Mammary epithelial cell (primary cell): ENCODE measurements at regions of chr6 and their contacts with region 1.

Region 1: GRCh38 chr6:134174672-134175198 is 122.3 kb upstream of the SLC2A12 start:
- DNase-seq: peak; percentile 90
- H3K4me3 ChIP-seq: peak overlapping the region; percentile 52 to 99 (median 97)
- H3K27ac ChIP-seq: peak overlapping the region; percentile 94
- H3K4me1 ChIP-seq: peaks cover 43% of the 10 kb centered on the region
- H3K27me3 ChIP-seq: no peaks in the 10 kb centered on the region
- CTCF ChIP-seq: peak in 1 of 2 donors; percentile 8

Region 2: GRCh38 chr6:133184798-133185372 is 989.9 kb before region 1 on chr6:
- CTCF ChIA-PET with region 1: no interaction called
- dilution Hi-C with region 1: no loop called
- in situ Hi-C with region 1: no loop called
- intact Hi-C with region 1: no loop called
- DNase-seq: no peak
- H3K4me3 ChIP-seq: no peak overlapping the region
- H3K27ac ChIP-seq: no peak overlapping the region
- H3K4me1 ChIP-seq: no peaks in the 10 kb centered on the region
- H3K27me3 ChIP-seq: peaks cover 7% of the 10 kb centered on the region
- CTCF ChIP-seq: peak; percentile 54

Region 3: GRCh38 chr6:134317471-134318131 is 142.9 kb after region 1 on chr6 and contains the start of gene SGK1:
- CTCF ChIA-PET with region 1: no interaction called
- dilution Hi-C with region 1: no loop called
- in situ Hi-C with region 1: no loop called
- intact Hi-C with region 1: loop called (anchors 5 kb)
- DNase-seq: peak; percentile 78
- H3K4me3 ChIP-seq: peak within 1 kb of the TSS; percentile 45 to 60 (median 52)
- H3K27ac ChIP-seq: no peak within 1 kb of the TSS
- H3K4me1 ChIP-seq: peaks cover 4% of the 10 kb centered on the region
- H3K27me3 ChIP-seq: no peaks in the 10 kb centered on the region
- CTCF ChIP-seq: peak in 1 of 2 donors; percentile 2
- total RNA-seq, gene SGK1: 84.5 to 755 TPM

Region 4: GRCh38 chr6:134422426-134423231 is 247.9 kb after region 1 on chr6:
- CTCF ChIA-PET with region 1: no interaction called
- dilution Hi-C with region 1: loop called (anchors 10 kb)
- in situ Hi-C with region 1: no loop called
- intact Hi-C with region 1: loop called (anchors 1 kb)
- DNase-seq: peak; percentile 98
- H3K4me3 ChIP-seq: no peak overlapping the region
- H3K27ac ChIP-seq: peak overlapping the region; percentile 95
- H3K4me1 ChIP-seq: peaks cover 48% of the 10 kb centered on the region
- H3K27me3 ChIP-seq: no peaks in the 10 kb centered on the region
- CTCF ChIP-seq: no peak

Region 5: GRCh38 chr6:134537146-134537555 is 362.4 kb after region 1 on chr6:
- CTCF ChIA-PET with region 1: no interaction called
- dilution Hi-C with region 1: loop called (anchors 25 kb)
- in situ Hi-C with region 1: no loop called
- intact Hi-C with region 1: loop called (anchors 1 kb)
- DNase-seq: peak; percentile 100
- H3K4me3 ChIP-seq: no peak overlapping the region
- H3K27ac ChIP-seq: peak overlapping the region; percentile 83
- H3K4me1 ChIP-seq: peaks cover 57% of the 10 kb centered on the region
- H3K27me3 ChIP-seq: no peaks in the 10 kb centered on the region
- CTCF ChIP-seq: no peak

Region 6: DNA sequence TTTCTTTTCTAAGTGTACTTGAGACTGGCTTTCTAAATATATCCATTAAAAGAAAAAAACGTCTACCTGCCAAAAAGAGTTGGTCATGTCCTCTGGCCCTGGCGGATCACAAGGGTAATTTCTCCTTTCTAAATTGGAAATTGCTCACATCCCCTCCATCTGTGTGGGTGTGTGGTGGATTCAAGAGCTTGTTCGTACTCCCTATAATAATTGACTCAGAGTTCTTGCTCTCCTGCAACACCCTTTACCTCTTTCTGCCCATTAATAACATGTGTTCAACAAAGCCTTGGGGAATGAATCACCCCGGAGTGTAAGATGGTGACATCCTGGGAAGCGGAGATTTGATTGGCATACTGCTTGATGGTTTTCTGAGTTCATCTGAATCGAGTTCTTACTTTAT is 511.3 kb after region 1 on chr6:
- CTCF ChIA-PET with region 1: no interaction called
- dilution Hi-C with region 1: no loop called
- in situ Hi-C with region 1: no loop called
- intact Hi-C with region 1: loop called (anchors 1 kb)
- DNase-seq: peak; percentile 95
- H3K4me3 ChIP-seq: no peak overlapping the region
- H3K27ac ChIP-seq: peak overlapping the region; percentile 40
- H3K4me1 ChIP-seq: peaks cover 28% of the 10 kb centered on the region
- H3K27me3 ChIP-seq: no peaks in the 10 kb centered on the region
- CTCF ChIP-seq: peak in 1 of 2 donors; percentile 25